ENCODE measurements at regions of chr2 and their contacts with region 1.

Region 1: GRCh38 chr2:86396291-86396785 is 44.8 kb upstream of the KDM3A start:
- DNase-seq: peak; percentile 65
- ATAC-seq: peak; percentile 82
- H3K4me3 ChIP-seq: peak overlapping the region; percentile 34; the same call in 1 of the 2 replicates
- H3K27ac ChIP-seq: no peak overlapping the region
- H3K4me1 ChIP-seq: peaks cover 13% of the 10 kb centered on the region
- H3K27me3 ChIP-seq: no peaks in the 10 kb centered on the region
- CTCF ChIP-seq: peak; percentile 78

Region 2: DNA sequence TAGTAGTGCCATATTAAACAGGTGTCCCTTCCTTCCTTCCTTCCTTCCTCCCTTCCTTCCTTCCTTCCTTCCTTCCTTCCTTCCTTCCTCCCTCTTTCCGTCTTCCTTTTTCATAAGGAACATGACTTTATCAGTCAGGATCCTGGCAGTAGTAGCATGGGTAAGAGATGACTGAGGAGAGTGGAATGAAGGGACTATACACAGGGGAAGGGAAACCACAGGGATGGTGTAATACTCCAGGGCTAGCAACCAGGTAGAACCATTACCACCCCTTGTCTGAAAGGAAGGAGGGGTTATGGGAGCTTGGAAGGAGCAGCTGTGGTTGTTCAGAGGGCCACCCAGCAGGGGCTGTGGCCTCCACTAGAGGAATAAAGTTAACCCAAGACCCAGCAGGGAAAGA is 21.6 kb after region 1 on chr2:
- CTCF ChIA-PET with region 1: no interaction called
- POLR2A ChIA-PET with region 1: interaction called, 26 read pairs
- intact Hi-C with region 1: no loop called
- DNase-seq: peak; percentile 63
- ATAC-seq: peak; percentile 58; the same call in 1 of the 2 replicates
- H3K4me3 ChIP-seq: no peak overlapping the region
- H3K27ac ChIP-seq: no peak overlapping the region
- H3K4me1 ChIP-seq: no peaks in the 10 kb centered on the region
- H3K27me3 ChIP-seq: peaks cover 20% of the 10 kb centered on the region
- CTCF ChIP-seq: no peak

Region 3: DNA sequence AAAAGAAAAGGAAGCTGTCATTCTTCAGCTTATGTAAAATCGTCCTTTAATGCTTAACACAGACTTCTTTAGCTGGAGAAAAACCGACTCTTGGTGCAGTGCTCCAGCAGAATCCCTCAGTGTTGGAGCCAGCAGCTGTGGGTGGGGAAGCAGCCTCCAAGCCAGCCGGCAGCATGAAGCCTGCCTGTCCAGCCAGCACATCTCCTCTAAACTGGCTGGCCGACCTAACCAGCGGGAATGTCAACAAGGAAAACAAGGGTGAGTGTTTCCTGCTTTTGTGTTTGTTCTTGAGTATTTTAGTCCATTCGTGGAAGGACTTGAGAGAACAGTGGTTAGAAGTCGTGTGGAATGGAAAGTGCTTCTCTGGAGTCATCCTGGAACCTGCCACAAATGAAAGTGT is 83.8 kb after region 1 on chr2:
- CTCF ChIA-PET with region 1: no interaction called
- POLR2A ChIA-PET with region 1: no interaction called
- intact Hi-C with region 1: no loop called
- DNase-seq: no peak
- ATAC-seq: no peak
- H3K4me3 ChIP-seq: no peak overlapping the region
- H3K27ac ChIP-seq: no peak overlapping the region
- H3K4me1 ChIP-seq: peaks cover 17% of the 10 kb centered on the region
- H3K27me3 ChIP-seq: no peaks in the 10 kb centered on the region
- CTCF ChIP-seq: no peak

Region 4: GRCh38 chr2:86492048-86492453 is 95.7 kb after region 1 on chr2:
- CTCF ChIA-PET with region 1: no interaction called
- POLR2A ChIA-PET with region 1: no interaction called
- intact Hi-C with region 1: loop called (anchors 10 kb)
- DNase-seq: no peak
- ATAC-seq: peak; percentile 64
- H3K4me3 ChIP-seq: no peak overlapping the region
- H3K27ac ChIP-seq: no peak overlapping the region
- H3K4me1 ChIP-seq: no peaks in the 10 kb centered on the region
- H3K27me3 ChIP-seq: no peaks in the 10 kb centered on the region
- CTCF ChIP-seq: no peak

Region 5: GRCh38 chr2:86753606-86754005 is 357.3 kb after region 1 on chr2:
- CTCF ChIA-PET with region 1: no interaction called
- POLR2A ChIA-PET with region 1: no interaction called
- intact Hi-C with region 1: no loop called
- DNase-seq: no peak
- ATAC-seq: no peak
- H3K4me3 ChIP-seq: no peak overlapping the region
- H3K27ac ChIP-seq: no peak overlapping the region
- H3K4me1 ChIP-seq: no peaks in the 10 kb centered on the region
- H3K27me3 ChIP-seq: no peaks in the 10 kb centered on the region
- CTCF ChIP-seq: no peak